Endothelial cell of umbilical vein (primary cell): ENCODE measurements at regions of chr2 and their contacts with region 1.

Region 1: DNA sequence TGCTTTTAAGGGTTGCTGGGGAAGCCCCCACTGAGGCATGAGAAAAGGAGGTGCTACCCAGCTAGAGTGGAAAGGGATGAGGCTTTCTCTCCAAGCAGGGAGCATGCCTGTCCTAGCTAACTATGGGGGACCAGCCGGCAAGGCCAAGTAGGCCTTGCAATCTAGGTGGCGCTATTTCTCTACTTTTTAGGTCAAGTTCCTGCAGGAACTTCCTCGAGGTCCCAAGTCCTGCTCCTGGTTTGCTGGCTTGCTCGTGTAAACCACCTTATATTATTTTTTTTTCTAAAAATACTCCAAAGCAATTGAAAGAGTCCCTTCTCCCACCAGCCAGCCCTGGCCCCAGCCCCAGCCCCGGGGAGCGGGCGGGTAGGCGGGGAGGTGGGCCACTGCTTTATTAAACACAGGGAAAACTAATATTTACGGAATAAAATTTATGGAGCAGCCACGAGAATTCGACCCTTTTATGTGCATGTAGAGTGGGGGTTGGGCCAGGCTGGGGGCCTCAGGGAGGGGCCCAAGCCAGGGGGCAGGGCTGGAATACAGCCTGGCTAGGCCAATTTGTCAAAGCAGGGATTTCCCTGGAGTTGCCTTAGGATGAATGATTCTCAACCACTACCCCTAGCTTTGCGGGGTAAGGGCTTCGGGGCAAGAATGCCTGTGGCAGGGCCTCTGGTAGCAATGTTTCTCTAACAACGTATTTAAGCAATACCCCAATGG is 12.8 kb upstream of the IHH start:
- DNase-seq: peak; percentile 23
- H3K4me3 ChIP-seq: no peak overlapping the region
- H3K27ac ChIP-seq: no peak overlapping the region
- H3K4me1 ChIP-seq: no peaks in the 10 kb centered on the region
- H3K27me3 ChIP-seq: no peaks in the 10 kb centered on the region
- CTCF ChIP-seq: peak; percentile 60 to 65
- POLR2A ChIP-seq: no peak

Region 2: DNA sequence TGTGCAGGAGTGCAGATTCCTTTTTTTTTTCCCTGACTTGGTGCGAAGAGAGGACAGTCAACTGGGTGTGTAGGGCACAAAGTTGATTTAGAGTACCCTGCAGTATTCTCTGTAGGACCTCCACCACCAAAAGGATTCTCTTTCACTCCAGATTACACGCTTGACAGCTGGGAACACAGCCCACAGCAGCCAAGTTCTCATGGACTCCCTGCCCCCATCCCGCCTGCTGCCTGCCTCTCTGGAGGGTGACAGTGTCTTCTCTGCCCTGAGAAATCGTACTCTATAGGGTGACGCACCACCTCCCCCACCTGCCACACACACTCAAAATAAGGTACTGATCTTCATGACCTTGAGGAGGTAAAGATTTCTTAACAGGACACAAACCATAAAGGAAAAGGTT is 13.8 kb after region 1 on chr2:
- CTCF ChIA-PET with region 1: interaction called, 23 read pairs
- POLR2A ChIA-PET with region 1: no interaction called
- dilution Hi-C with region 1: no loop called
- intact Hi-C with region 1: no loop called
- DNase-seq: no peak
- H3K4me3 ChIP-seq: no peak overlapping the region
- H3K27ac ChIP-seq: no peak overlapping the region
- H3K4me1 ChIP-seq: no peaks in the 10 kb centered on the region
- H3K27me3 ChIP-seq: no peaks in the 10 kb centered on the region
- CTCF ChIP-seq: no peak
- POLR2A ChIP-seq: no peak

Region 3: GRCh38 chr2:219099329-219099728 is 25.8 kb after region 1 on chr2:
- CTCF ChIA-PET with region 1: interaction called, 68 read pairs
- POLR2A ChIA-PET with region 1: no interaction called
- dilution Hi-C with region 1: no loop called
- intact Hi-C with region 1: loop called (anchors 1 kb)
- DNase-seq: no peak
- H3K4me3 ChIP-seq: no peak overlapping the region
- H3K27ac ChIP-seq: no peak overlapping the region
- H3K4me1 ChIP-seq: no peaks in the 10 kb centered on the region
- H3K27me3 ChIP-seq: no peaks in the 10 kb centered on the region
- CTCF ChIP-seq: no peak
- POLR2A ChIP-seq: no peak

Region 4: GRCh38 chr2:219752731-219753130 is 679.2 kb after region 1 on chr2:
- CTCF ChIA-PET with region 1: no interaction called
- POLR2A ChIA-PET with region 1: no interaction called
- dilution Hi-C with region 1: no loop called
- intact Hi-C with region 1: no loop called
- DNase-seq: no peak
- H3K4me3 ChIP-seq: no peak overlapping the region
- H3K27ac ChIP-seq: no peak overlapping the region
- H3K4me1 ChIP-seq: no peaks in the 10 kb centered on the region
- H3K27me3 ChIP-seq: no peaks in the 10 kb centered on the region
- CTCF ChIP-seq: no peak
- POLR2A ChIP-seq: no peak